ENCODE measurements at regions of chr5 and their contacts with region 1.

Region 1: DNA sequence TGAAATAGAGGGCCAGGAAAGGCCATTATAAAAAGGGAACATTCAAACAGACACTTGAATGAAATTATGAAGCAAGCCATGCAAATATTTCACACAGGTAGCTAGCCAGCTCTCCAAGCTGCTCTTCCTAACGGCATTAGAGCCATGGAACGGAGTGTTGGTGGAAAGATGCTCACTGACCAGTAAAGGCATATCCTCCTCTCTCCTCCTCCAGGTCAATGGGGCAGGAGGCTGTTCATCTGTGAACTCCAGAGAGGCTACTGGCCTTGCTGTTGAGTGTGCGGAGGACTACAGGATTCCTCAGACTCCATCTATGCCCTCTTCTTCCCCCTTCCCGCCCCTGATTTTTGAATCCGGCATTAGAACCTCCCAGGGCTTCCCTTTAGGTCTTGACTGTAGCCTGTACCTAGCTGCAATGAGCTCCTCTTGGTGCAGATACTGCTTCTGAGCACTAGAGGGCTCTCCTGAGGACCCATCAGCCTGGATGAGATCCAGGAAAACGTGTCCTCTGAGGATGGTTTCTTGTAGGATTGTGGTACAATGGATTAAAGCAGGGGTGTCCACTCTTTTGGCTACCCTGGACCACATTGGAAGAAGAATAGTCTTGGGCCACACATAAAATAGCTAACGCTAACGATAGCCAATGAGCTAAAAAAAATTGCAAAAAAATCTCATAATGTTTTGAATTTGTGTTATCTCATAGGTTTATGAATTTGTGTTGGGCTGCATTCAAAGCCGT is 162.2 kb downstream of the SREK1 start:
- DNase-seq: peak; percentile 65 to 69 (median 66)
- ATAC-seq: peak; percentile 94
- H3K4me3 ChIP-seq: no peak overlapping the region
- H3K27ac ChIP-seq: no peak overlapping the region
- H3K4me1 ChIP-seq: no peaks in the 10 kb centered on the region; a peak in 2 of 5 replicates
- H3K27me3 ChIP-seq: peaks cover 4 to 13% of the 10 kb centered on the region in 2 experiments; a peak in 3 of 5 replicates
- CTCF ChIP-seq: peak; percentile 78 to 82 (median 79)
- EP300 ChIP-seq: no peak
- POLR2A ChIP-seq: no peak
- RAD21 ChIP-seq: peak; percentile 28 to 63; a peak in 2 of 4 replicates

Region 2: DNA sequence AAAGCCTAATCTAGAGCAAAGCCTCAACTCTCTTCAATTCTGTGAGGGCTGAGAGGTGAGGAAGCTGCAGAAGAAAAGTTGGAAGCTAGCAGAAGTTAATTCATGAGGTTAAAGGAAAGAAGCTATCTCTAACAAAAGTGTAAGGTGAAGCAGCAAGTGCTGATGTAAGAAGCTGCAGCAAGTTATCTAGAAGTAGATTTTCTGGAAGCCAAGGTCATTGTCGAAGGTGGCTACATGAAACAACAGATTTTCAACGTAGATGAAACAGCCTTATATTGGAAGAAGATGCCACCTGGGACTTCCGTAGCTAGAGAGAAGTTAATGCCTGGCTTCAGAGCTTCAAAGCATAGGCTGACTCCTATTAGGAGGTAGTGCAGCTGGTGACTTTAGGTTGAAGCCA is 120.2 kb before region 1 on chr5:
- CTCF ChIA-PET with region 1: no interaction called
- POLR2A ChIA-PET with region 1: no interaction called
- in situ Hi-C with region 1: no loop called
- intact Hi-C with region 1: no loop called
- DNase-seq: no peak
- ATAC-seq: peak; percentile 18
- H3K4me3 ChIP-seq: no peak overlapping the region
- H3K27ac ChIP-seq: no peak overlapping the region
- H3K4me1 ChIP-seq: no peaks in the 10 kb centered on the region
- H3K27me3 ChIP-seq: no peaks in the 10 kb centered on the region
- CTCF ChIP-seq: no peak
- EP300 ChIP-seq: no peak
- POLR2A ChIP-seq: no peak
- RAD21 ChIP-seq: no peak

Region 3: DNA sequence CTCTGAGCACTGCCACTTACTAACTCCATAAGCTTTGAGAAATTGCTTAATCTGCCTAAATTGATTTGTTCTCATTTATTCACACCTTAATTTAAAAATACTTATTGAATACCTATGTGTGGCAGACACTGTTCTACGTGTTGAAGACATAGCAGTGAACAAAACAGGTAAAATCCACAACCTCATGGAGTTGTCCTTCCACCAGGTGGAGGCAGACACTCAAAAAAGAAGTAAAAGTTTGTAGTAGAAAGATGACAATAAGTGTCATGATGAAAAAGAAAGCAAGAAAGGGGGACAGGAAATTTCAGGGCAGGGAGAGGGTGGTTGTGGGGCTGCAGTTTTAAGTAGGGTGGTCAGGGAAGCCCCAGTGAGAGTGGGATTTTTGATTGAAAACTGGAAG is 67.2 kb before region 1 on chr5:
- CTCF ChIA-PET with region 1: no interaction called
- POLR2A ChIA-PET with region 1: no interaction called
- in situ Hi-C with region 1: no loop called
- intact Hi-C with region 1: loop called (anchors 2 kb)
- DNase-seq: peak in 2 of 4 experiments; percentile 18 to 22
- ATAC-seq: peak; percentile 69
- H3K4me3 ChIP-seq: no peak overlapping the region
- H3K27ac ChIP-seq: no peak overlapping the region
- H3K4me1 ChIP-seq: no peaks in the 10 kb centered on the region
- H3K27me3 ChIP-seq: peaks cover 35 to 59% of the 10 kb centered on the region in 2 experiments
- CTCF ChIP-seq: peak; percentile 19 to 49 (median 29); a peak in 4 of 6 replicates
- EP300 ChIP-seq: no peak
- POLR2A ChIP-seq: no peak
- RAD21 ChIP-seq: peak in 1 of 2 experiments; percentile 59; a peak in 2 of 4 replicates

Region 4: DNA sequence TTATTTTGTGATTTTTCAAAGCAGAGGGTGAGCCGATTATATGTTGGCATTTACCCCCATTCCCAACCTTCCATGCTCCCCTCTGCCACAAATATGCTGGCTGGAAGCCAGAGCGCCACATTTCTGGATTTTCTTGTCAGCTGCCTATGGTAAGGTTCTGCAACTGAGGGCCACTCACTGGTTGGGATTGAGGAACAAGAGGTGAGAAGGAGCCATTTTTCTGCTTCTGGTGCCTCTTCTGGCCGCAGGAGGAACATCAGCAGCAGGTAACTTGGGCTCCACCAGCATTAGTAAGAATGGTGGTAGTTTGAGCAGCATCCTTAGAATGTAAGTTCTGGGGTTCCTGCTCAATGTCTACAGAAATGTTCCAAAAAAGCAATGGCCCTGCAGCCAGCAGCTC is 130.4 kb after region 1 on chr5:
- CTCF ChIA-PET with region 1: no interaction called
- POLR2A ChIA-PET with region 1: no interaction called
- in situ Hi-C with region 1: no loop called
- intact Hi-C with region 1: loop called (anchors 5 kb)
- DNase-seq: peak in 2 of 4 experiments; percentile 16 to 18
- ATAC-seq: peak; percentile 80
- H3K4me3 ChIP-seq: no peak overlapping the region
- H3K27ac ChIP-seq: no peak overlapping the region
- H3K4me1 ChIP-seq: no peaks in the 10 kb centered on the region
- H3K27me3 ChIP-seq: no peaks in the 10 kb centered on the region
- CTCF ChIP-seq: peak; percentile 39 to 58 (median 41)
- EP300 ChIP-seq: no peak
- POLR2A ChIP-seq: no peak
- RAD21 ChIP-seq: peak in 1 of 2 experiments; percentile 26; a peak in 1 of 4 replicates

Region 5: DNA sequence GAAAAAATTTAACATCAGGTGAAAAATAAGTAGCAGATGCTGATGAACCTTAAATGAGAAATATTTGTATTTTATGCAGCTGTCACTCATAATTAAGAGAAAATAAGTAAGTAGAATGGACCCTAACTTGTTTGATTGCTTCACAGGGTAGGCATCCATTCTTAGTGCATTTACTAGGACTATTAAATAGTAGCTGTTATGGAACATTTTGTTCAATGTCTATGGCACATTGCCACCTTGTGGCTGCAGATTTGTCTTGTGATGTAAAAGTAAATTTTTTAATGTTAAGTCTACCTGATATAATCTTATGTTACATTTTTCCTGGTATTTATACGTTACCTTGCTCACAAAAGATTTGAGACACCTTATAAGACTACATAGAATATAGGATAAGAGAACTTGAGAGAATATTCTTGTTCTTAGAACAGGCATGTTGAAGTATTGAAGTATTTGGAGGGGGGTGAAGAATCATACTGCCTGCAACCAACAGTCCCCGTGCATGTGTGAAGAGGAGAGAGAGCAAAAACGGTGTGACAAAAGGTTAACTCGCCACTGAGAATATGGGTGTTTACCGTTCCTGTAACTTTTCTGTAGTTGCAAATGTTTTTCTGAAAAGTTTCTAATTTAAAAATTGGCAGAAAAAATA is 451.0 kb after region 1 on chr5:
- CTCF ChIA-PET with region 1: interaction called, 4 read pairs
- POLR2A ChIA-PET with region 1: no interaction called
- in situ Hi-C with region 1: no loop called
- intact Hi-C with region 1: loop called (anchors 2 kb)
- DNase-seq: peak in 2 of 4 experiments; percentile 9 to 39
- ATAC-seq: no peak; the same call in 2 of the 3 replicates
- H3K4me3 ChIP-seq: no peak overlapping the region
- H3K27ac ChIP-seq: no peak overlapping the region
- H3K4me1 ChIP-seq: no peaks in the 10 kb centered on the region
- H3K27me3 ChIP-seq: no peaks in the 10 kb centered on the region
- CTCF ChIP-seq: peak in 2 of 3 experiments; percentile 40 to 63; a peak in 2 of 6 replicates
- EP300 ChIP-seq: no peak
- POLR2A ChIP-seq: no peak
- RAD21 ChIP-seq: peak; percentile 53 to 71

Region 6: DNA sequence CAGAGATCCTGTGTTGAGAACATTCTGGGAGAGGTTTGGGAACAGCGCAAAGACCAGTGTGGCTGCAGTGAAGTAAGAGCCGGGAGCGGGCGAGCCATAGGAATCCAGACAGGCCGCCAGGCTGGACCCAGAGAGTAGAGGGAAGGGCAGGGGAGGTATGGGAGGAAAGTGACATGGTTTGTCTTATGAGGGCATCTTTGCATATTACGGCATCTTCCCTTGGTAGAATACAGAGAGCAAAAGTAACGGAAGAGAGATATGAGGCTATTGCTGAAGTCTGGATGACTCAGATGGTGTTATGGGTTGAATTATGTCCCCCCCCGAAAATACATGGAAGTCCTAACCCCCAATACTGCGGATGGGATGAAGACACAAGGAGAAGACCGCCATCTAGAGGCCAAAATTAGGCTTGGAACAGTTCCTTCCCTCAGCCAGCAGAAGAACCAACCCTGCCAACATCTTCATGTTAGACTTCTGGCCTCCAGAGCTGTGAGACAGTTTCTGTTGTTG is 558.1 kb after region 1 on chr5:
- CTCF ChIA-PET with region 1: no interaction called
- POLR2A ChIA-PET with region 1: no interaction called
- in situ Hi-C with region 1: no loop called
- intact Hi-C with region 1: loop called (anchors 2 kb)
- DNase-seq: peak in 1 of 4 experiments; percentile 10
- ATAC-seq: peak; percentile 70
- H3K4me3 ChIP-seq: no peak overlapping the region
- H3K27ac ChIP-seq: no peak overlapping the region
- H3K4me1 ChIP-seq: no peaks in the 10 kb centered on the region
- H3K27me3 ChIP-seq: peaks cover 0 to 3% of the 10 kb centered on the region in 2 experiments; a peak in 1 of 5 replicates
- CTCF ChIP-seq: peak; percentile 19 to 37 (median 29); a peak in 3 of 6 replicates
- EP300 ChIP-seq: no peak
- POLR2A ChIP-seq: no peak
- RAD21 ChIP-seq: peak in 1 of 2 experiments; percentile 35; a peak in 2 of 4 replicates

Region 7: DNA sequence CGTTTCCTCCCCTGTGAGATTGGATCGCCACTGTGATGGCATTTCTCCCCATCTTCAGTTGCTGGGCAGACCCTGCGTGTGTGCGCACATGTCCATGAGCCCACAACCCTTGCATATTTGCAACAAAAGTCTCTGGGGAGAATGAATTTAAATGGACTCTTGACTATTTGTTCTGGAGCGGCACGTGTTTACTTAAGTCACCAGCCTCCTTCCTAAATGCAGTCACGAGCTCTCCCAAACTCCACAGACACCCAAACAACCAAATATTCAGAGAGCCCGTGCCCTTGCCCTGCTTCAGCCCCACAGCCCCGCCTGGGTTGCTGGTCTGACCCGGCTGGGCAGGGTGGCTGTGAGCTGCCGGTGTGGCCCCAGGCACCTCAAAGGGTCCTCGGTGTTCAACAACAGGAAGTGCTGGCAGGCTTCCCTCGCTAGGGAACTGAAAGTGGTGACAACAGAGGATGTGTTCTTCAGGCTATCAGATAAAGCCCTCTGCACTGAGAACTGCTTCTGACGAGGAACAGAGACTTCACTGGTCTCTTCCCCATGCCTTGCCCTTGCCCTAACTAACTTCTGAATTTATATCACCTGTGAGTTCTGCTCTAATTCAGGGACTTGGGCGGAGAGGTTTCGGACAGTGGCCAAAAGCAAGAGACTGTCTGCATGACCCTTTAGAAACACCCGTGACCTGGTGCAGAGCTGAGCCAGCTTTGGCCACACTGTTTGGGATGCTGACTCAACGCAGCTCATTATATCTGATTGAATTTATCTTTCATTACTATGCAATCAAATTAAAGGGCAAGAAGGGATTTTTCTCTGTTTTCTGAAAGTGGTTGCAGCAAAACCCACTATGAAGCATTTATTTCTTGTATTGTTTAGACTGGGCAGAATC is 909.6 kb after region 1 on chr5:
- CTCF ChIA-PET with region 1: no interaction called
- POLR2A ChIA-PET with region 1: no interaction called
- in situ Hi-C with region 1: loop called (anchors 10 kb)
- intact Hi-C with region 1: no loop called
- DNase-seq: peak in 1 of 4 experiments; percentile 25
- ATAC-seq: peak; percentile 88
- H3K4me3 ChIP-seq: no peak overlapping the region
- H3K27ac ChIP-seq: no peak overlapping the region
- H3K4me1 ChIP-seq: peaks cover 0 to 6% of the 10 kb centered on the region in 2 experiments; a peak in 1 of 5 replicates
- H3K27me3 ChIP-seq: peaks cover 10 to 28% of the 10 kb centered on the region in 2 experiments
- CTCF ChIP-seq: no peak
- EP300 ChIP-seq: no peak
- POLR2A ChIP-seq: no peak
- RAD21 ChIP-seq: no peak

Measured in K562 (cell line).